ENCODE measurements at regions of chr4 and their contacts with region 1.

Region 1: DNA sequence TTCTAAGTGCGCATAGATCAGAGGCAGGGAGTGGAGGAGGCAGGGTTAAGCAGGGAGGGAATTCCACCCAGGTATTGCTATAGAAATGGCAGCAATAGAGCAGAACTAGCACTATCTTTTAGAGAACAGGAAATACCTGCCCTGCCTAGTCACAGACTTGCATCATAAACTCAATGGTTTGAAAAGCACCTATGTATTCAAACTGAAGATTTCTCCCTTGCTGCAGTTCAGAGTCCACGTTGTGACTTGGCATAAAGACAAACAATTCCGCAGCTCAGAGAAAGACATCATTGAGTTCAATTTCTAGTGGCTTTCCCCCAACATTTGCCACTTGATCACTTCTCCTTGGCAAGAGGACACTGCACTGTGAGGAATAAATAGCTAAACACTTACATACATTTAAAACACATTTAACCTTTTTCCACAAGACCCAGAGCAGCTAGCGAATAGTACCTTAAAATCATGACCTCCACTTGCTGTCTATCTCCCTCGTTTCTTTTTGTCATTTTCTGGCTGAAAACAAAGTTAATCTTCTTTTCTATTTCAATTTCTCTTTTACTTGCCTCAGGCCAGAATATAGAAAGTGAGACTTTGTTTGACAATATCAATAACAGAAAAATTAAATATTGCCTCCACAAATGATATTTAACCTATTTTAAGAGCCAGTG is 42.4 kb downstream of the SLC7A11 start:
- DNase-seq: peak; percentile 92
- ATAC-seq: peak; percentile 94
- H3K4me3 ChIP-seq: peak overlapping the region; percentile 41; the same call in 1 of the 2 replicates
- H3K27ac ChIP-seq: peak overlapping the region; percentile 76
- H3K4me1 ChIP-seq: peaks cover 42% of the 10 kb centered on the region
- H3K27me3 ChIP-seq: no peaks in the 10 kb centered on the region
- CTCF ChIP-seq: no peak

Region 2: GRCh38 chr4:138235419-138235952 is 35.8 kb after region 1 on chr4:
- CTCF ChIA-PET with region 1: no interaction called
- POLR2A ChIA-PET with region 1: no interaction called
- intact Hi-C with region 1: loop called (anchors 5 kb)
- DNase-seq: peak; percentile 86
- ATAC-seq: peak; percentile 87
- H3K4me3 ChIP-seq: 0 out of 2 replicates have a peak overlapping the region, but pooled peaks have one; percentile 22
- H3K27ac ChIP-seq: peak overlapping the region; percentile 94
- H3K4me1 ChIP-seq: peaks cover 42% of the 10 kb centered on the region
- H3K27me3 ChIP-seq: no peaks in the 10 kb centered on the region
- CTCF ChIP-seq: no peak

Region 3: DNA sequence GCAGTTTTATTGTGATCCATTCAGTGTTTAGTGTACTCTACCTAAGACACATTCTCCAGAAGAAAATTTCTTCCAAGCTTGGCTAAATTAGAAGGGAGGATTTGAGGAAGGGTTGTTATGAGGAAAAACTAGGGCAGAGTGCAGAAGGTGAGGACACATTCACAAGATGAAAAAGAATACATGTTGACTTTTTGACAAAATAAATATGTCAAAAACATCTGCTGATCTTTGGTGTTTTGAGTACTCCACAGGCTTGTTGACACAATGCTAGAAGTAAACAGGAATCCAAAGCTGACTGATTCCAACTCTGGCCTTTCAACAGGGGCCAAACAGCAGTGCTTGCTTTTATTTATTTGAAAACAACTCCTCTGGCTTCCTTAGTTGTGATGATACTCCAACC is 168.2 kb after region 1 on chr4:
- CTCF ChIA-PET with region 1: no interaction called
- POLR2A ChIA-PET with region 1: no interaction called
- intact Hi-C with region 1: no loop called
- DNase-seq: no peak
- ATAC-seq: no peak
- H3K4me3 ChIP-seq: no peak overlapping the region
- H3K27ac ChIP-seq: no peak overlapping the region
- H3K4me1 ChIP-seq: no peaks in the 10 kb centered on the region
- H3K27me3 ChIP-seq: no peaks in the 10 kb centered on the region
- CTCF ChIP-seq: no peak

Region 4: GRCh38 chr4:138602664-138603063 is 403.0 kb after region 1 on chr4:
- CTCF ChIA-PET with region 1: no interaction called
- POLR2A ChIA-PET with region 1: no interaction called
- intact Hi-C with region 1: no loop called
- DNase-seq: no peak
- ATAC-seq: no peak
- H3K4me3 ChIP-seq: no peak overlapping the region
- H3K27ac ChIP-seq: no peak overlapping the region
- H3K4me1 ChIP-seq: no peaks in the 10 kb centered on the region
- H3K27me3 ChIP-seq: no peaks in the 10 kb centered on the region
- CTCF ChIP-seq: no peak

Measured in PC-3 (cell line).